ENCODE measurements at regions of chr17 and their contacts with region 1.

Region 1: DNA sequence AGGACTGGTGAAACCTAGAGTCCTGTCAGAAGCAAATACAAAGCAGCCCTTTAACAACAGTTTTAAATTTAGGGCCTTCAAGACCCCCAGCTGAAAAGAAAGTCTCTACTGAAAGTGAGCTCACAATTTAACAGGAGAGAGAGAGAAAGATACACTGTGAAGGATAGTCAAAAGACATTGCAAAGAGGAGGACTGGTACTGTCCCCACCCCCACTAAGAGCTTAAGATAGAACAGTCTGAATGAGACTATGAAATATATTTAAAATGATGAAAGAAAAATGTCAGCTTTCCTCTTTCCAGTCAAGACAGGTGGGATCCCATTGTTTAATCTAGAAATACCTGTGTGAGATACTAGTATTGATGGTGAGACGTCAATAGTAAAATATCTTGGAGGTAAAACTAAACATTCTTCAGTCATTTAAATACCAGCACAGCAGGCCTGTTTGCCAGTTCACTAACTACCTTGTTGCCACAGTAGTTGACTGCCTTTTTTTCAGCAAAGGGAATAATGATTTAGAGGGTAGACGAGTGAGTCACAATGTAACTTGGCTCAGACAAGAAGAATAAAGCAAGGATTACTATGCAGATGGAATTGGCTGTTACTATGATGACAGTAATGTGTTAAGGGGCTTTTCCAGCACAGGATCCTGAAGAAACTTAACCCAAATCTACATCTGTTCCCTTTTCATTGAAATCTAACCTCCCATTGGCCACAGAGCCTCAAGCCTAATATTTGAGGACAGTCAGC is 47.2 kb upstream of the RASL10B start:
- DNase-seq: no peak
- H3K4me3 ChIP-seq: no peak overlapping the region
- H3K27ac ChIP-seq: no peak overlapping the region
- H3K4me1 ChIP-seq: peaks cover 0 to 7% (median 0%) of the 10 kb centered on the region in 4 donors
- H3K27me3 ChIP-seq: no peaks in the 10 kb centered on the region
- CTCF ChIP-seq: no peak
- EP300 ChIP-seq: no peak
- POLR2A ChIP-seq: no peak

Region 2: GRCh38 chr17:35627417-35627816 is 56.8 kb before region 1 on chr17:
- intact Hi-C with region 1: loop called (anchors 10 kb)
- DNase-seq: no peak
- H3K4me3 ChIP-seq: no peak overlapping the region
- H3K27ac ChIP-seq: no peak overlapping the region
- H3K4me1 ChIP-seq: no peaks in the 10 kb centered on the region
- H3K27me3 ChIP-seq: no peaks in the 10 kb centered on the region
- CTCF ChIP-seq: no peak
- EP300 ChIP-seq: no peak
- POLR2A ChIP-seq: no peak

Region 3: GRCh38 chr17:35786941-35787432 is 102.8 kb after region 1 on chr17:
- intact Hi-C with region 1: no loop called
- DNase-seq: no peak
- H3K4me3 ChIP-seq: no peak overlapping the region
- H3K27ac ChIP-seq: peak overlapping the region; percentile 76 to 85 (median 80)
- H3K4me1 ChIP-seq: peaks cover 33 to 93% (median 90%) of the 10 kb centered on the region in 4 donors
- H3K27me3 ChIP-seq: no peaks in the 10 kb centered on the region
- CTCF ChIP-seq: no peak
- EP300 ChIP-seq: no peak
- POLR2A ChIP-seq: no peak